Left cardiac atrium (tissue), 4 donors: ENCODE measurements at regions of chr10 and their contacts with region 1.

Region 1: GRCh38 chr10:71319042-71319799 is at the start of gene SLC29A3:
- DNase-seq: peak; percentile 84
- ATAC-seq: peak; percentile 94 to 96
- total RNA-seq, gene SLC29A3: 2.5 to 3.6 TPM

Region 2: GRCh38 chr10:71244431-71245419 is 74.5 kb before region 1 on chr10:
- intact Hi-C with region 1: no loop called
- DNase-seq: peak; percentile 71
- ATAC-seq: peak; percentile 68 to 72

Region 3: GRCh38 chr10:71378336-71379117 is 59.3 kb after region 1 on chr10:
- intact Hi-C with region 1: loop called in 1 of 2 experiments (anchors 5 kb)
- DNase-seq: no peak
- ATAC-seq: no peak

Region 4: DNA sequence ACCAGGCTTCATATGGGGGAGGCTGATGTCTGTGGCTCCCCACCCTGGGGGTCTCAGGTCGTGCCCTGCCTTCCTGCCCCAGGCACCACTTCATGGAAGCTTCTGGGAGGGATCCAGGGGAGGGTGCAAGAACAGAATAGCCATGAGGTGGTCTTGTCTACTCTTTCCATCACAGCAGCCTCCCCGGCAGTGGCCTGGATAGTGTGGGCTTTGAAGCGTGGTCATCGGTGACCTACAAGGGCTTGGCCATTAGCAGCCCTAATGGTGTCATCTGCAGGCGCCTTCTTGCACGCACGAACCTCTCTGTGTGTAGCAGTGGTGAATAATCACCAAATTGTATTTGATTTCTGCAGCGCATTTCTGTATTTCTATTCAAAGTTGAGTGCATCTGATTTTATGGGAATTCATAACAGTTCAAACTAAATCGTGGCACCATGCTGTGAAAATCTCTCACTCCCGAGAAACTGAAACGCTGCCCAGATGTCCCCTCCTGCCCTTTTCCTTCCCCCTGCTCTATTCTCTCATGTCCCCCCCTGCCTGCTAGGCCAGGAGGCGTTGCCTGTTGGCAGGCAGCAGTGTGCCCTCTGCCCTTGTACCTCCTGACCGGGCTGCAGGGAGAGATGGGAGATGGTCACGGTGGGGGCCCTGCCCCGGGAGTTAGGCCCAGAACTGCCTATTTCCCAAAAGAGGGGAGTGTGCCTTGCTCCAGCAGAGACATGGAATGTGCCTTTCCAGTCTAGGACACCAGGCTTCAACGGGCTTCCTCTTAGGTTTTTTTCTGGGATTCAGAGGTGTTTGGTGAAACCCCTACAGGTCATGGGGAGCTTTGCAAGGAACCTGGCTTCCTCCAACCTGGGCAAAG is 112.2 kb after region 1 on chr10:
- intact Hi-C with region 1: no loop called
- DNase-seq: no peak
- ATAC-seq: peak in 1 of 2 donors; percentile 83

Region 5: GRCh38 chr10:71696628-71697326 is 377.6 kb after region 1 on chr10:
- intact Hi-C with region 1: loop called in 1 of 2 experiments (anchors 10 kb)
- DNase-seq: peak; percentile 74
- ATAC-seq: peak; percentile 46 to 62

Region 6: GRCh38 chr10:71812016-71812912 is 493.0 kb after region 1 on chr10:
- intact Hi-C with region 1: loop called in 1 of 2 experiments (anchors 5 kb)
- DNase-seq: peak; percentile 80
- ATAC-seq: peak; percentile 81

Region 7: GRCh38 chr10:71893920-71894319 is 574.7 kb after region 1 on chr10:
- intact Hi-C with region 1: loop called in 1 of 2 experiments (anchors 10 kb)
- DNase-seq: no peak
- ATAC-seq: no peak